ENCODE measurements at regions of chr5 and their contacts with region 1.

Region 1: DNA sequence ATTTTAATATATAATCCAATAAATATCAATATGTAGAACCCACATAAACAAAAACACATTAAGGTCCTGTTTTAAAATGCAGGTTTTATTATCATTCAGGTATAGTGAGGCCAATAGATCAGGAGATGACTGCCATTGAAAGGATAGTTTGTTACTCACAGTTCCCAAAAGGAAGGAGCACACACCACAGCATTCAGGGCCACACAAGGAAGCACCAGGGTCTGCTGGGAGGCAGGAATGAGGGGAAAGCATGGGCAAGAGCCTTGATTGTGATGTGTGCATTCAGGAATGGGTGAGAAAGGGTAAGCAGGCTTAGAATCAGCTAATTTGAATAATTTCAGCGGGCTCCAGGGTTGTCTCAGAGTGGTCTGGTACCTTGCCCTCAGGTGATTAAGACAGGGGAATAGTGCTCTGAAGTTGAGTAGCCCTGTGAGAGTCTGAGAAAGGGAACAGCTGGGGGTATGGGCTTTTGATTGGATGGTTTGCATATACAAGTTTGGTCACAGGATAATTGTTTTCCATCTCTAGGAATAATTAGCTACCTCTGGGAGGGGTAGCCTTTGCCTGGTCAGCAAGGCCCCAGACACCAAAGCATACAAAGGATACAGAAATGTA is 19.8 kb upstream of the OTULIN start:
- DNase-seq: no peak
- H3K4me3 ChIP-seq: no peak overlapping the region
- H3K27ac ChIP-seq: no peak overlapping the region
- H3K27me3 ChIP-seq: peaks cover 0 to 39% (median 0%) of the 10 kb centered on the region in 45 donors
- CTCF ChIP-seq: no peak

Region 2: GRCh38 chr5:14118527-14119320 is 526.0 kb before region 1 on chr5:
- intact Hi-C with region 1: loop called in 1 of 2 experiments (anchors 10 kb)
- DNase-seq: peak; percentile 30 to 91 (median 90)
- H3K4me3 ChIP-seq: peak overlapping the region in 24 of 59 donors; percentile 1 to 47 (median 18)
- H3K27ac ChIP-seq: peak overlapping the region in 48 of 59 donors; percentile 1 to 88 (median 65)
- H3K27me3 ChIP-seq: no peaks in the 10 kb centered on the region
- CTCF ChIP-seq: peak in 21 of 56 donors; percentile 6 to 52 (median 15)

Region 3: DNA sequence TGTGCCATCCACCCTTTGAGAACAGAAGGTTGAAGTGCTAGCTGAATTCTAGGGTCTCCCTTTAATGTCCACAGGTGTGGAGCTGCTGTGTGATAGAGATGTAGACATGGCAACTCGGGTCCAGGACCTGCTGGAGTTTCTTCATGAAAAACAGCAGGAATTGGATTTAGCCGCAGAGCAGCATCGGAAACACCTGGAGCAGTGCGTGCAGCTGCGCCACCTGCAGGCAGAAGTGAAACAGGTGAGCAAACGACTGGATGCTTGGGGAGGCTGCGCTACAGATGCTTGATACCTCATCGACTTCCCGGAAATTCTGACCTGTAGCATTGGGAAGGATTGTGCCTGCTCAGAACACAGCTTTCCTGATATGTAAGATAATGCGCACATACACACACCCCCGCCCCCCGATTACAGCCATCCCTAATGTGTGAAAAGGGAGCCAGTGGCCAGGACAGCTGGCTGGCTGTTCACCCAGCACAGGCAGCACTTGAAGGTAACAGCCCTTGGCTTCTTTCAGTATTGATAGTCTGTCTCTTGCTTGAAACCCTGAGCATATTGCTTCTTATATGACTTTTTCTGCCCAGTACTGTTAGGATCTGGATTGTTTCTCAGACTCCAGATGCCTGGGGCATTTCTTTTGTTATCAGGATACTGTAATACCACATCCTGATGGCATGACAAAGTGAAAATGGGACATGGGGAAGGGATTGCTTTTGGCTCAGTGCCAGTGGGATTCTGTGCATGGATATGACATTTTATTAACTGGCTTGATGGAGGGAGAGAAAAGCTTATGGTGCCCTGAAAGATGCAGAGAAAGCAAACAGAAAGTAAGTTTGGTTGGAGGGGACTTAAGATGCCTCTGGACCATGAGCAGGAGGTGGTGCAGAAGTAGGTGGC is 279.9 kb before region 1 on chr5:
- intact Hi-C with region 1: loop called (anchors 5 kb)
- DNase-seq: no peak
- H3K4me3 ChIP-seq: no peak overlapping the region
- H3K27ac ChIP-seq: peak overlapping the region in 5 of 59 donors; percentile 2 to 57 (median 11)
- H3K27me3 ChIP-seq: no peaks in the 10 kb centered on the region
- CTCF ChIP-seq: peak in 24 of 56 donors; percentile 1 to 51 (median 24)

Region 4: GRCh38 chr5:14476786-14477435 is 167.8 kb before region 1 on chr5:
- intact Hi-C with region 1: no loop called
- DNase-seq: no peak
- H3K4me3 ChIP-seq: no peak overlapping the region
- H3K27ac ChIP-seq: no peak overlapping the region
- H3K27me3 ChIP-seq: no peaks in the 10 kb centered on the region
- CTCF ChIP-seq: no peak